Head of caudate nucleus (tissue), 42 donors: ENCODE measurements at regions of chr16 and their contacts with region 1.

Region 1: GRCh38 chr16:47141773-47142485 is 1.8 kb downstream of the NETO2 start:
- DNase-seq: peak; percentile 75 to 97 (median 90)

Region 2: DNA sequence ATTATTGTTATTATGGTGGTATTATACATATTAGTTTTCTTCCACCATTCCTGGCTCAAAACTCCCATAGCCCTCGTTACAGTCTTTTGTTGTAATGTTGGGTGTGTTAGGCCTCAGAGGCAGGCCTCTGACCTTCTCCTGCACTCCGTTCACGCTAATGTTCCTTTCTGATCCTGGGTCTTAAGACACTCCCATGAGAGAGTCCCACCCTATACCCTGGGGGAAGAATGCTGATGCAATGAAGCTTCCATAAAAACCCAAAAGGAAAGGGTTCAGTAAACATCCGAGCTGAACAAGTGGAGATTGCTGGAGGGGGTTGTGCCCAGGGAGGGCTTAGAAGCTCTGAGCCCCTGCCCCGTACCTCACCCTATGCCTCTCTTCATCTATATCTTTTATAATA is 143.1 kb after region 1 on chr16:
- intact Hi-C with region 1: no loop called
- DNase-seq: no peak

Region 3: GRCh38 chr16:48054881-48055601 is 913.1 kb after region 1 on chr16:
- intact Hi-C with region 1: loop called (anchors 10 kb)
- DNase-seq: peak; percentile 59 to 90 (median 76)